Calu3 (cell line): ENCODE measurements at regions of chr20 and their contacts with region 1.

Region 1: DNA sequence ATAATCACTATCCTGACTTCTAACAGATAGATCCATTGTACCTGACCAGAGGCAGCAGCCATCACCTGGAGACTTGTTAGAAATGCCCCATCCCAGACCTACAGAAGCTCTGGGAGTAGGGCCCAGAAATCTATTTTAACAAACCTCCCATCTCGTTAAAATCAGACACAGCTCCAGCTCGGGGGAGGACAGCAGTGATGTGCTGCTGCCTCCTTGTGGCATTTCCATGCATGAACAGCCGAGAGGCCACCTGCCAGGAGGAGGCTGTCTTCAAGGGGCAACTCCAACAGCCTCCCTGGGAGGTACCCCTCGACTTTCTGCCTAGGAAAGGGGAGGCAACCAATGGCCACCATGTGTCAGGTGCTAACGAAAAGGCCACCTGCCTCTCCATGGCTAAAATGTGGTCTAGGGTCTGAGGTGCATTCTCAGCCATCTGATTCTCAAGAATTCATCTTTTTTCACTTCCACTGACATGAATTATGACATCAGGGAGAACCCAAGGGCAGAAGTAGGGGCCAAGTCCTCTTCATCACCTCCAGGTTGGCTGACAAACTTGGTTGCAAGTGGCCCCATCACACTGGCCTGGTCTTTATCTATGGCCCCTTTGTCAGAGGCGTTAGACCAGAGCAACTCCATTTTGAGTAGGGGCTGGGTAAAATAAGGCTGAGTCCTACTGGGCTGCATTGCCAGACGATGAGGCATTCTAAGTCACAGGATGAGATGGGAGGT is 12.2 kb upstream of the KCNK15 start:
- DNase-seq: peak; percentile 89
- H3K4me3 Mint-ChIP-seq: no peak overlapping the region
- H3K27ac Mint-ChIP-seq: peak overlapping the region; percentile 77
- H3K4me1 Mint-ChIP-seq: peaks cover 77% of the 10 kb centered on the region
- H3K27me3 Mint-ChIP-seq: no peaks in the 10 kb centered on the region
- CTCF ChIP-seq: peak; percentile 96

Region 2: GRCh38 chr20:44210422-44211176 is 522.9 kb before region 1 on chr20 and contains the start of gene OSER1:
- CTCF ChIA-PET with region 1: no interaction called
- intact Hi-C with region 1: loop called (anchors 10 kb)
- DNase-seq: peak; percentile 100
- H3K4me3 Mint-ChIP-seq: peak within 1 kb of the TSS; percentile 90
- H3K27ac Mint-ChIP-seq: peak within 1 kb of the TSS; percentile 94
- H3K4me1 Mint-ChIP-seq: peaks cover 42% of the 10 kb centered on the region
- H3K27me3 Mint-ChIP-seq: no peaks in the 10 kb centered on the region
- CTCF ChIP-seq: no peak
- total RNA-seq, gene OSER1: 52.2 and 56.7 TPM in 2 replicates

Region 3: DNA sequence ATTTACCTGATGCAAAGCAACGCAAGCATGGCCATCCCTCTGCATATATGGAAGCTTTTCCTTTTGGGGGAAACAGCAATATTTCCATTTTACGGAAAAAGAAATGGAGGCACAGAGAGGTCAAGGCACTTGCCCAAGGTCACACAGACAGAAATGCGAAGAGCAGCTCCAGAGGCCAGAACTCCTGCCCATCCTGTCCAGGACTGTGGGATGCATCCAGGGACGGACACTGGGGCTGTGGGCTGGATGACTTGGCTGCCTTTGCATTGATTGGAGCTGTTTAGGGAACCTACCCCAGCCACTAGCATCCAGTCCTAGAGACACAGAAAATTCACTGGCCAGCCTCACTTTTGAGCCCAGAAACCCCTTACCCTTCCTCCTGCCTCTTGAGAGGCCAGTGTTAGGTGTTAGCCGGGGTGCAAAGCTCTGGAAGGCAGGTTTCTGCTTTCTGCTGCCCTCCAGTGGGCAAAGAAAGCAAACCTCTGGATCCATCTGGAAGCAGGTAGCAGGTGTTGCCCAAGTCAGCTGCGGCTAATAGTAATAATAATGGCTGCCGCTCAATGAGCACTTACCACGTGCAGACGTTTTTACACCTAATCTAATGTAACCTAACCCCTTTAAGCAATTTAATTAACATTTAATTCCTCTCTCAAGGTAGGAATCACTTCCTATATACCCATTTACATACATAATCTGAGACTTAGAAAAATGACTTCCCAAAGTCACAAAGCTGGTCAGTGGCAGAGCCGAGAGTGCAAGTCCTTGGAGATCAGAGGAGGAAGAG is 50.0 kb before region 1 on chr20:
- CTCF ChIA-PET with region 1: interaction called, 131 read pairs
- intact Hi-C with region 1: loop called (anchors 1 kb)
- DNase-seq: peak; percentile 90
- H3K4me3 Mint-ChIP-seq: no peak overlapping the region
- H3K27ac Mint-ChIP-seq: no peak overlapping the region
- H3K4me1 Mint-ChIP-seq: peaks cover 36% of the 10 kb centered on the region
- H3K27me3 Mint-ChIP-seq: no peaks in the 10 kb centered on the region
- CTCF ChIP-seq: peak; percentile 84

Region 4: GRCh38 chr20:44692932-44693476 is 40.5 kb before region 1 on chr20:
- CTCF ChIA-PET with region 1: interaction called, 16 read pairs
- intact Hi-C with region 1: loop called (anchors 2 kb)
- DNase-seq: peak; percentile 90
- H3K4me3 Mint-ChIP-seq: no peak overlapping the region
- H3K27ac Mint-ChIP-seq: peak overlapping the region; percentile 88
- H3K4me1 Mint-ChIP-seq: peaks cover 62% of the 10 kb centered on the region
- H3K27me3 Mint-ChIP-seq: no peaks in the 10 kb centered on the region
- CTCF ChIP-seq: no peak

Region 5: GRCh38 chr20:44714696-44715482 is 18.6 kb before region 1 on chr20 and contains the start of gene CCN5:
- CTCF ChIA-PET with region 1: interaction called, 12 read pairs
- intact Hi-C with region 1: no loop called
- DNase-seq: peak; percentile 94
- H3K4me3 Mint-ChIP-seq: peak within 1 kb of the TSS; percentile 17
- H3K27ac Mint-ChIP-seq: peak within 1 kb of the TSS; percentile 18
- H3K4me1 Mint-ChIP-seq: peaks cover 48% of the 10 kb centered on the region
- H3K27me3 Mint-ChIP-seq: no peaks in the 10 kb centered on the region
- CTCF ChIP-seq: no peak
- total RNA-seq, gene CCN5: 0.94 and 1.9 TPM in 2 replicates

Region 6: DNA sequence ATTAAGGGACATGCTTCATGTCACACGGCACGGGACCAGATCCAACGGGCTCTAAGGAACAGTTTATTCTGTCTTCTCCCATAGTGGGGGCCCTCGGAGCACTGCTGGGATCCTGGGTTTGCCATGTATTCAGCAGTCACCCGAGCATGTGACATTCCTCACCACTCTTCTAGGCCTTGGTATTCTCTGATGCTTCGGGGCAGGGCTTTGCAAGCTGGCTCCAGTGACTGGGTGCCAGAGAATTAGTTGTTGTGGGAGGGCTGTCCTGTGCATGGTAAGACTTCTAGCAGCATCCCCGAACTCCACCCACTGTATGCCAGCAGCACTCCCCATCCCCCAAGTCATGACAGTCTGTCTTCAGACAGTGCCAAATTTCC is 12.9 kb before region 1 on chr20:
- CTCF ChIA-PET with region 1: interaction called, 15 read pairs
- intact Hi-C with region 1: no loop called
- DNase-seq: peak; percentile 69
- H3K4me3 Mint-ChIP-seq: no peak overlapping the region
- H3K27ac Mint-ChIP-seq: peak overlapping the region; percentile 1
- H3K4me1 Mint-ChIP-seq: peaks cover 56% of the 10 kb centered on the region
- H3K27me3 Mint-ChIP-seq: no peaks in the 10 kb centered on the region
- CTCF ChIP-seq: no peak

Region 7: GRCh38 chr20:44819936-44820335 is 86.4 kb after region 1 on chr20:
- CTCF ChIA-PET with region 1: no interaction called
- intact Hi-C with region 1: no loop called
- DNase-seq: no peak
- H3K4me3 Mint-ChIP-seq: no peak overlapping the region
- H3K27ac Mint-ChIP-seq: no peak overlapping the region
- H3K4me1 Mint-ChIP-seq: no peaks in the 10 kb centered on the region
- H3K27me3 Mint-ChIP-seq: peaks cover 56% of the 10 kb centered on the region
- CTCF ChIP-seq: no peak